ENCODE measurements at regions of chr18 and their contacts with region 1.

Region 1: GRCh38 chr18:22279741-22280452 is 110.5 kb downstream of the GATA6 start:
- DNase-seq: no peak
- H3K4me3 Mint-ChIP-seq: no peak overlapping the region
- H3K27ac Mint-ChIP-seq: no peak overlapping the region
- H3K4me1 Mint-ChIP-seq: no peaks in the 10 kb centered on the region
- H3K27me3 Mint-ChIP-seq: peaks cover 2% of the 10 kb centered on the region

Region 2: DNA sequence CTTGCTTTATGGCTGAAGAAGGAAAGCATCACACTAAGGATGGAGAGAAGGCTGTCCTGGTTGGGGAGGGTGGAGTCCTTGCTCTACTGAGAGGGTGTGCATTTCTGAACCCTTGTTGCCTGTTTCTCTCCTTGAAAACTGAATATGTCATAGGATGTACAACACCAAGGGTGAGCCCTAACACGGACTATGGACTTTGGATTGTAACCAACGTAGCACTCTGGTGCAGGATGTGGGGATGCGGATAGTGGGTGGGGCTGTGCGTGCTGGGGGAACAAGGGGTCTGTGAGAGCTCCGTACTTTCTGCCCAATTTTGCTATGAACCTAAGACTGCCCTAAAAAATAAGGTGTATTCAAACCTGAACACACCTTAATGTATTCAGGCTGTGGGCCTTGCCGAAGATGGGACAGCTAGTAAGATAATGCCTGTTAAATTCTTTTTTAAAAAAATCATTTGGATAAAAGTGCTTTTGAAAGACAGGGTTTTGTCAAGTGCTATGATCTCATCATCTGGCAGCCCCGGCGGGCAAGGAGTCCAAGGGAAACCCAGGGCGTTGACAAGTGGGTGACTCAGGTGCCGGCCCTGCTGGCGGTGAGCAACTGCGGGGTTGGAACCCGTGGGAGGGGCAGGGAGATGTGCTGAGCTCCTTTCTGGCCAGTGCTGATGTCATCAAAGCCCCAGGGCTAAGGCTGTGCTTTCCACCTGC is 56.5 kb before region 1 on chr18:
- CTCF ChIA-PET with region 1: no interaction called
- intact Hi-C with region 1: loop called (anchors 10 kb)
- DNase-seq: no peak
- H3K4me3 Mint-ChIP-seq: no peak overlapping the region
- H3K27ac Mint-ChIP-seq: no peak overlapping the region
- H3K4me1 Mint-ChIP-seq: peaks cover 3% of the 10 kb centered on the region
- H3K27me3 Mint-ChIP-seq: no peaks in the 10 kb centered on the region